AG04450 (cell line): ENCODE measurements at regions of chr1 and their contacts with region 1.

Region 1: GRCh38 chr1:15323351-15323988 is 76.4 kb downstream of the FHAD1 start:
- DNase-seq: peak; percentile 65
- H3K4me3 ChIP-seq: no peak overlapping the region
- H3K27ac ChIP-seq: no peak overlapping the region
- H3K27me3 ChIP-seq: no peaks in the 10 kb centered on the region
- CTCF ChIP-seq: peak; percentile 97

Region 2: DNA sequence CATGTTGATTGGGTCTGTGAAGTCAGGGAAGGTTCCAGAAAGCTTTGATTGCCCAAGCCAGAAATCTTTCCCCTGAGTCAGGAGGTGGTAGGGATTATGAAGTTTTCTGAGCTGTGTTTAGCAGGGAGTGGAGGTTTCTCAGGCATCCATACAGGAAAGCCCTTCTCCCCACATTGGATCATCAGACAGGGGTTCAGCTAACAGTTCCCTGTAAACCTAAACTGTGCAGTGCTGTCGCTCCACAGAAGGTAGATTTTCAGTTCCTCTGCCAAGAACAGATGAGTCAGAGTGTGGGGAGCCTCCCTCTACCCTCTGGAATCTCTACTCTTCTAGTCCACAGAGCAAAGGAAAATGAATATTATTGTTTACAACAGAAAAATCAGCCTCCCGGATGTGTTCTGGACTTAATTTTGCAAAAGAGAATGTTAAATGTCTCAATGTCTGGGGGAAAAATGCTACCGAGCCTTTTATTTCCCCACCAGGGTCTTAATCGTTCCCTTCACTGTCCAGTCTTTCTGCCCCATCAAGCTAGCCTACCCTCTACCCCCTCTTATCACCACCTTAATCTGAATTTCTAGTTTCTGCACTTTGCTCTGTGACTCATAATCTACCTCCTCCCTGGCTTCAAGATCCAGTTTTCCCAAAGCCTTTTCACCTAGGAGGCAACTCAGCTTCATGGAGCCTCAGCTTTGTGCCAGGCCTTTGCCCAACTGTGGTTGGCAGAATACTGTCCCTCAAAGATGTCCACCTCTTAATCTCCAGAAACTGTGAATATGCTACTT is 1267.8 kb before region 1 on chr1:
- CTCF ChIA-PET with region 1: no interaction called
- POLR2A ChIA-PET with region 1: no interaction called
- DNase-seq: no peak
- H3K4me3 ChIP-seq: no peak overlapping the region
- H3K27ac ChIP-seq: no peak overlapping the region
- H3K27me3 ChIP-seq: no peaks in the 10 kb centered on the region
- CTCF ChIP-seq: no peak

Region 3: GRCh38 chr1:15299179-15299578 is 24.3 kb before region 1 on chr1:
- CTCF ChIA-PET with region 1: interaction called, 24 read pairs
- POLR2A ChIA-PET with region 1: no interaction called
- DNase-seq: no peak
- H3K4me3 ChIP-seq: no peak overlapping the region
- H3K27ac ChIP-seq: no peak overlapping the region
- H3K27me3 ChIP-seq: no peaks in the 10 kb centered on the region
- CTCF ChIP-seq: no peak

Region 4: DNA sequence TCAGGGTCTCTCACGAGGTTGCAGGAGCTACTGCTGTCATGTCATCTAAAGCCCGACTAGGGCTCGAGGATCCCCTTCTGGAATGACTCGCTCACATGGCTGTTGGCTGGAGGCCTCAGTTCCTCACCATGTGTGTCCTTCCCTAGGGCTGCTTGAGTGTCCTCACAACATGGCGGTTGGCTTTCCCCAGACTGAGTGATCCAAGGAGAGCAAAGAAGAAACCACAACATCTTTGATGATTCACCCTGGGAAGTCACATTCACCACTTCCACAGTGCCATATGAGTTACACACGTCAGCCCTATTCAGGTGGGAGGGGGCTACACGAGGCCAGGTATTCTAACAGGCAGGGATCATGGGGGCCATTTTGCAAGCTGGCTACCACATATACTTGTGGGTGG is 11.6 kb before region 1 on chr1:
- CTCF ChIA-PET with region 1: interaction called, 42 read pairs
- POLR2A ChIA-PET with region 1: no interaction called
- DNase-seq: no peak
- H3K4me3 ChIP-seq: no peak overlapping the region
- H3K27ac ChIP-seq: no peak overlapping the region
- H3K27me3 ChIP-seq: peaks cover 6% of the 10 kb centered on the region
- CTCF ChIP-seq: no peak

Region 5: DNA sequence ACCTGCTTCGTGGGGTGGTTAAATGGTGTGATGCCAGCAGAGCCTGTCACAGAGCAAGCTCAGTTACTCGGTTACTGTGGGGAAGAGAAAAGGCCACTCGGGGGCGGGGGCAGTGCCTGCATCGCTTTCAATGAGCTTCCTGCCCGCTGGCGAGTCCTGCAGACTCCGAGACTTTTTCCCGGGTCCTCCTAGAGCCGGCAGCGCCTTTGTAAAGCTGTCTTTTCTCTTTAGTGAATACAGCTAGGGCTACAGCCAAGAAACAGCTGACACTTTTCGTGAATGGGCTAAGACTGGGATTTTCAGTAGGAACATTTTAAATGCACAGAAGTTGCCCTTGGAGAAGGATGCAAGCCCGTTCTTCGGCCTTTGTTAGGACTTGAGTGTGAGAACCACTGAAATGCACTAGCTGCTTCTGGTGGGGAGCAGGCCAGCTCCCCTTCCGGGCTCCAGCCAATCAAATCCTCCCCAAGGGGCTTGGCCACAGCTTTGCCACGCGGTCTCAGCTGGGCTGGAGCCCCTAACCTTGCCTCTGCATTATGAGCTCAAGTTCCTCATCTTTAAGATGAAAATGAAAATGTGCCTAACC is 62.8 kb after region 1 on chr1:
- CTCF ChIA-PET with region 1: interaction called, 11 read pairs
- POLR2A ChIA-PET with region 1: no interaction called
- DNase-seq: no peak
- H3K4me3 ChIP-seq: no peak overlapping the region
- H3K27ac ChIP-seq: no peak overlapping the region
- H3K27me3 ChIP-seq: peaks cover 6% of the 10 kb centered on the region
- CTCF ChIP-seq: no peak

Region 6: DNA sequence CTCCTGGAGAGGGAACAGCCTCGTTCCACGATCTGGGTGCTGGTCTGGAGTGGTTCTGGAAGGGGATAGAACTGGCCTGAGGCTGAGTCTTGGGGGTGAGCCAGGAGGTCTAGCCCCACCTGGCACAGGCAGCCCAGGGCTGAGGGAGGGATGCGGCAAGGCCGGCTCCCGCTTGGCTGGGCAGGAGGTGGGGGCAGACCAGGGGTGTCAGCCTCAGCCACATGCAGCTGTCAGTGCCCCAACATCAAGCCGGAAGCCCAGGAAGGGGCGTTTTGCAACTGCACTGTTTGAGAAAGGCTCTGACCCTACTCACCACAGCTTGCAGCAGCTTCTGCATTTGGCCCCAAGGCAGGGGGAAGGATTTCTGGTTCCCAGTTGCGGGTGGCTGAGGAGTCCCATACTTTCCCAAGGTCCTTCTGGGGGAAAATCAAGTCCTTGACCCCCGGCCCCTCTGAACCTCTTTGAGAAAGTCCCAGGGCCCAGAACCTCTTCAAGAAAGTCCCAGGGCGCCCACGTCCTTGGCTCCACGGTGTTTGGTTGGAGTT is 88.2 kb after region 1 on chr1:
- CTCF ChIA-PET with region 1: interaction called, 16 read pairs
- POLR2A ChIA-PET with region 1: interaction called, 5 read pairs
- DNase-seq: no peak
- H3K4me3 ChIP-seq: peak overlapping the region; percentile 82
- H3K27ac ChIP-seq: no peak overlapping the region
- H3K27me3 ChIP-seq: no peaks in the 10 kb centered on the region
- CTCF ChIP-seq: no peak

Region 7: DNA sequence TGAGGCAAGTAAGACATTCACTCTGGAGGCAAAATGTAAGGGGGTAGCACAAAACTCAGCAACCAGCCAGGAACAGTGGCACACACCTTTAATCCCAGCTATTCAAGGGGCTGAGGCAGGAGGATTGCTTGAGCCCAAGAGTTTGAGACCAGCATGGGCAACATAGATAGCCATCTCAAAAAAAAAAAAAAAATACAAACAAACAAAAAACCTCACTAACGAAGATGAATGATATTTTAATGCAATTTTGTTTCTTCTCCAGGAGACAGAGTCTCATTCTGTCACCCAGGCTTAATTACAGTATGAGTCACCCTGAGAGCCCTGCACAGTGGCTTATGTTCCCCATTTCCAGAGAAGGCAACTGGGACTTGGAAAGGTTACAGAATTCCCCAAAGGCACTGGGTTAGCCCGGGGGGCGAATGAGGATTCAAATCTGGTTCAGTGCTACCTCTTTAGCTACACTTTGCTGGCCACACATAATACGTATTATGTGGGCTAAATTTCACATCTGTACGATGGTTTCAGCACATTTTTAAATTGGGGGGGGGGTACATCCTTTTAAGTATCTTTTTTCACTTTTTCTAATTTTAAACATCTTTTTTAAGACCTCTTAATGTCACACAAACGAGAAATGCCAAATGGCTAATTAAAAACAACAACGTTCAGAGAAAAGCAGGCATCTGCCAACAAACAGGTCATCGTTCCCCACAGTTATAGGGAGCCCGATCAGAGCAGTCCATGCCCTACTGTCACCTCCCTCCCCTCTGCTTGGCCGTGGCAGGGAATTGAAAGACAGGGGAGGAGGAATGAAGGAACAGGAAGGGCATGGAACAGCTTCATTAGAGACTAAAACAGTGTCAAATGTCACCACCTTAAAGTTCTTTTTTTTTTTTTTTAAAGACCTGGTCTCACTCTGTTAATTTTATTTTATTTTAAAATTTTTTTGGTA is 136.6 kb after region 1 on chr1:
- CTCF ChIA-PET with region 1: interaction called, 11 read pairs
- POLR2A ChIA-PET with region 1: no interaction called
- DNase-seq: no peak
- H3K4me3 ChIP-seq: no peak overlapping the region
- H3K27ac ChIP-seq: peak overlapping the region; percentile 2
- H3K27me3 ChIP-seq: peaks cover 6% of the 10 kb centered on the region
- CTCF ChIP-seq: no peak